Tibial artery (tissue), 4 donors: ENCODE measurements at regions of chr3 and their contacts with region 1.

Region 1: DNA sequence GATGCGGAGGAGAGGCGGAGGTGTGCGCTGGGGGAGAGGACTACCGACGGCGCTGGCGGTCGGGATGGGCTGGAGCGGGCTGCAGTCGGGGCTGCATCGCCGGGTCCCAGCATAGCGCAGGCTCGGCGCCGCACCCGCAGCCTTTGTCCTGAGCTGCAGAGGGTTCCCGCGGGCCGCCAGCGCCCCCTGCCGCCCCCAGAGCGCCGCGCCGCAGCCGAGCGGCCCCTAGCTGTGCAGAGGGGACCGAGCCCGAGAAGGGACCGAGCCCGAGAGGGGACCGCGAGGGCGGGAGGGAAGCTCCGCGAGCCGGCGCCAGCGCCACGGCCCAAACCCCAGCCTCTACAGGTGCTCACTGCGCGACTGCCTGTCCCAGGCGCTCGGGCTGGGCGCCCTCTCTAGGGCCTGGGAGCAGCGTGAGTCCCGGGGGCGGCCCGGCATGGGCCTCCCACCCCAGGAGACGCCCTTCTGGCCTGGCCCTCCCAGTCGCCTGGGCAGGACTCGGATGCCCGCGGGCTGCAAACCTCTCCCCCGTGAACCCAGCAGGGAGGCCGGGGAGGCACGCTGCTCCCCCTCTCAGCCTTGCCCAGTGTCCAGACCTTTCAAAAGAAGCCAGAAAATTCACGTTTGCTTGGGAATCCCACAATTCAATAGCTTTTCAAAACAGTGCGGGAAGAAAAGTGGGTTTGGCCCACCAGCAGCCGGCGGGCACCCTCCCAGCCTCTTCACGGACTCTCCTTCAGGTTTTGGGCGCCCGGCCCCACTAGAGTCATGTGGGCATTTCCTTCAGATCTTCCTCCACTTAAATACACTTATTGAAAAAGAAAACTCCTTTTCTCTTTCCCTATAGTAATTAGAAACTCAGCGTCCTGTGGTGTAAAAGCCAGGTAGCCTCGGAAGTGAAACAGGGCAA is 134.7 kb downstream of the TPRA1 start:
- DNase-seq: peak; percentile 61 to 72
- H3K4me3 ChIP-seq: peak overlapping the region; percentile 9 to 33
- H3K27ac ChIP-seq: no peak overlapping the region
- H3K4me1 ChIP-seq: peaks cover 0 to 24% (median 23%) of the 10 kb centered on the region in 4 donors
- H3K27me3 ChIP-seq: peaks cover 4 to 73% of the 10 kb centered on the region in 2 donors
- CTCF ChIP-seq: peak; percentile 88 to 89

Region 2: DNA sequence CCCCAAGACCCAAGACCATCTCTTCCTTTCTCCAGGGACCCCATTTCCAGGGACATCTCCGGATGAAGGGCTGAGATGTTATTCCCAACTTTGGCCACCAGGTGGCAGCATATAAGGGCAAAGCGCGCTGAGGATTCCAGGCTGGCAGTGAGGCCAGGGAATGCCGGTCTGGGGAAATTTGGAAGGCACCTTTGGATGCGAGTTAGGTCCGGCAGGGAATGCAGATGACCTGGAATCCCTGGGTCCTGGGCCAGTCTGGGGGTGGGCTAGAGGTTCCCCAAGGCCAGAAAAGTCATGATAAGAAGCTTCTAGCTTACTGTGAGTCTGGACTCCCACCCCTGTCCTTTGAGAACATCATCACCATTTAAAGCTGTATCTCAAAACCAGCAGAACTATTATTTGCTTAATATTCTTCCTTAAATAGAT is 933.4 kb before region 1 on chr3:
- intact Hi-C with region 1: loop called (anchors 10 kb)
- DNase-seq: peak; percentile 50 to 70
- H3K4me3 ChIP-seq: no peak overlapping the region
- H3K27ac ChIP-seq: no peak overlapping the region
- H3K4me1 ChIP-seq: peaks cover 0 to 14% (median 12%) of the 10 kb centered on the region in 4 donors
- H3K27me3 ChIP-seq: peaks cover 0 to 48% of the 10 kb centered on the region in 2 donors
- CTCF ChIP-seq: peak; percentile 82 to 92

Region 3: DNA sequence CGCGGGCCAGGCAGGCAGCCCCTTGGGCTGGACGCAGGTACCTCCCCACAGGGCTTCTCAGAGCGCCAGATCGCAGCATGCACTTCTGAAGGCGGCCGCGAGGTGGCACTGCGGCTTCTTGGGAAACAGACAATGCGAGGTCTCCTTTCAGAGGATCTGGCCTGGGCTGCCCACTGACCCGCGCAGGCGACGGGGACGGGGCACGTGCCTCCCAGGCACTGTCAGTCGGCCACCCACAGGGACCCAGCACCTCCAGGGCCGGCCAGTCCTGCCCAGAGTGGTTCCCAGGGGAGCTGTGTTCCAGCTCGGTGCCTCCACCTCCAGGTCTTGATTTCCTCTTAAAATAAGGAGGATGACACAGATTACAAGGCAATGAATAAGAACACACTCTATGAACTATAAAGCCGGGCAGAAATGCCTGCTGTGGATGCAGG is 776.5 kb before region 1 on chr3:
- intact Hi-C with region 1: loop called (anchors 5 kb)
- DNase-seq: peak; percentile 82 to 86
- H3K4me3 ChIP-seq: no peak overlapping the region
- H3K27ac ChIP-seq: no peak overlapping the region
- H3K4me1 ChIP-seq: peaks cover 0 to 23% (median 17%) of the 10 kb centered on the region in 4 donors
- H3K27me3 ChIP-seq: peaks cover 0 to 11% of the 10 kb centered on the region in 2 donors
- CTCF ChIP-seq: peak; percentile 90 to 96

Region 4: GRCh38 chr3:126752303-126752842 is 703.4 kb before region 1 on chr3:
- intact Hi-C with region 1: loop called (anchors 10 kb)
- DNase-seq: peak; percentile 70 to 86
- H3K4me3 ChIP-seq: no peak overlapping the region
- H3K27ac ChIP-seq: no peak overlapping the region
- H3K4me1 ChIP-seq: peaks cover 0 to 3% (median 0%) of the 10 kb centered on the region in 4 donors
- H3K27me3 ChIP-seq: no peaks in the 10 kb centered on the region
- CTCF ChIP-seq: peak; percentile 80 to 82